Naive thymus-derived CD4-positive, alpha-beta T cell (primary cell): ENCODE measurements at regions of chr1 and their contacts with region 1.

Region 1: DNA sequence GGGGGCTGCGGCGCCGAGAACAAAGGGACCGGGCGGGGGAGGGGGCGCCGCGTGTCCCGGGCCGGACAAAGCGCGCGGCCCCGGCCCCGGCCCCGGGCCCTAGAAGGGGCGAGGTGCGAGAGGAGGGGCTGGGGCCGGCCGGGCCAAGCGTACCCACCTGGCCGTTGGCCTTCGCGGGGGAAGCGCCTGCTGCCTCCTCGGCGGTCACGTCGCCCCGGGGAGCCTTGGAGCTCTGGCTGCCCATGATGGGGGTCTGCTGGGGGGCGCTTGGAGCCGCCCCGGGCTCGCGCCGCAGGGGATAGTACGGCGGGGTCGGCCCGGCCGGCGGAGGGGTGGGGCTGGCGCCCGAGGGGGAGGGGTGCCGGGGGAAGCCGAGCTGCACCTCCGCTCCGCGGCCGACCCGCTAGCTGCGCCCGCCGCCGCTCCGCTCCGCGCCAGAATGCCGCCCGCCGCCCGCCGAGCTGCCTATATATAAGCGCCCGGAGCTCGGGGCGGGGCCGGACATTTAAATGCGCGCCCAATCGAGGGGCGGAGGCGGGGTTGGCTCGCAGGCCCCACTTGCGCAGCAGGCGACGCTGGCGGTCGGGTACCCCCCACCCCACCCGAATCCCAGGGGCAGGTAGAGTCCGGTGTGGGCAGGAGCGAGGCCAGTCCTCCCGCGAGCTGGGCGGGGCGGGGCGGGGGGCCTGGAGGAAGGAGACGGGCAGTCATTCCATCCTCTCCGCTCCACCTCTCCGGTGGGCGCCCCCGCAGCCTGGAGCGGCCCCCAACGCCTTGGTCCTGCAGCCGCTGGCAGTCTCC is at the start of gene MARCKSL1:
- DNase-seq: peak; percentile 81 to 90 (median 87)
- ATAC-seq: peak; percentile 64
- H3K4me3 ChIP-seq: peak within 1 kb of the TSS; percentile 60
- H3K4me3 Mint-ChIP-seq: peak within 1 kb of the TSS; percentile 82 to 93 (median 90)
- H3K27ac ChIP-seq: peak within 1 kb of the TSS; percentile 70
- H3K27ac Mint-ChIP-seq: peak within 1 kb of the TSS; percentile 74 to 95 (median 89)
- H3K4me1 ChIP-seq: peaks cover 20 to 33% of the 10 kb centered on the region in 2 donors
- H3K4me1 Mint-ChIP-seq: peaks cover 38 to 52% (median 43%) of the 10 kb centered on the region in 7 donors
- H3K27me3 ChIP-seq: no peaks in the 10 kb centered on the region
- H3K27me3 Mint-ChIP-seq: peaks cover 0 to 1% (median 0%) of the 10 kb centered on the region in 5 donors
- total RNA-seq, gene MARCKSL1: 22.2 to 70.2 (median 41.7) TPM

Region 2: DNA sequence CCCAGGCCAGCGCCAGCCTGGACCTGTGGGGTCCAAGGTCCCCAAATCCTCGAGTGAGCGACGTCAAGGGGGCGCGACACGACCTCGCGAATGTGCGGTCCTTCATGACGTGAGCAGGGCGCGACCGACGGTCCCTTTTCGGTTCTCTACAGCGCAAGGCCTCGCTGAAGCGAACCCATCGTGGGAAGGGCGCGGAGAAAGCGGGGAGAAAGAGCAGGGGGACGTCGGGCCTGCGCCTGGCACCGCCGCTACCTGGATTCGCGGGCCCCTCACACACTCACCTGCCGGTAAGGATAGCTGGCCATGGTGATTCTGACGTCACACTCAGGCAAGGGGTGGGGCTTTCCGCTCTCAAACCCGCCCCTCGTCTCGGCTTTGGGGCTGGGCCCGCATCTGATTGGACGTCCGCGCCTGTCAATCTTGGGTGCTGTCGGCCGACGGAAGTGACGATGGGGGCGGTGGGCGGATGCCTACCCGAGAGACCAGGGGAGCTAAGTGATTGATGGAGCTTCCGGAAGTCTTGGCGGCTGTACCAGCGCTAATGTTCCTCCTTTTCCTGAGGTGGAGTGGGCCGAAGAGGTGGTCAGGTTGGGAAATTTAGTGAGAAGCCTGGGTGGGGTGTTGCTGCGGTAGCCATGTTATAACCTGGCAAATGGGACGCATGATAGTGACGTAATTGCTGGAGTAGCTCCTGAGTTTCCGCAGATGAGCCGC is 691.3 kb before region 1 on chr1 and contains the start of gene PEF1:
- CTCF ChIA-PET with region 1: no interaction called
- POLR2A ChIA-PET with region 1: no interaction called
- intact Hi-C with region 1: loop called in 1 of 2 experiments (anchors 5 kb)
- DNase-seq: peak; percentile 97 to 100 (median 99)
- ATAC-seq: peak; percentile 94
- H3K4me3 ChIP-seq: peak within 1 kb of the TSS; percentile 91
- H3K4me3 Mint-ChIP-seq: peak within 1 kb of the TSS; percentile 92 to 100 (median 98)
- H3K27ac ChIP-seq: peak within 1 kb of the TSS; percentile 98
- H3K27ac Mint-ChIP-seq: peak within 1 kb of the TSS; percentile 98 to 100 (median 99)
- H3K4me1 ChIP-seq: peaks cover 27 to 30% of the 10 kb centered on the region in 2 donors
- H3K4me1 Mint-ChIP-seq: peaks cover 18 to 47% (median 40%) of the 10 kb centered on the region in 7 donors
- H3K27me3 ChIP-seq: no peaks in the 10 kb centered on the region
- H3K27me3 Mint-ChIP-seq: no peaks in the 10 kb centered on the region
- total RNA-seq, gene PEF1: 37.7 to 49.8 (median 40.8) TPM

Region 3: DNA sequence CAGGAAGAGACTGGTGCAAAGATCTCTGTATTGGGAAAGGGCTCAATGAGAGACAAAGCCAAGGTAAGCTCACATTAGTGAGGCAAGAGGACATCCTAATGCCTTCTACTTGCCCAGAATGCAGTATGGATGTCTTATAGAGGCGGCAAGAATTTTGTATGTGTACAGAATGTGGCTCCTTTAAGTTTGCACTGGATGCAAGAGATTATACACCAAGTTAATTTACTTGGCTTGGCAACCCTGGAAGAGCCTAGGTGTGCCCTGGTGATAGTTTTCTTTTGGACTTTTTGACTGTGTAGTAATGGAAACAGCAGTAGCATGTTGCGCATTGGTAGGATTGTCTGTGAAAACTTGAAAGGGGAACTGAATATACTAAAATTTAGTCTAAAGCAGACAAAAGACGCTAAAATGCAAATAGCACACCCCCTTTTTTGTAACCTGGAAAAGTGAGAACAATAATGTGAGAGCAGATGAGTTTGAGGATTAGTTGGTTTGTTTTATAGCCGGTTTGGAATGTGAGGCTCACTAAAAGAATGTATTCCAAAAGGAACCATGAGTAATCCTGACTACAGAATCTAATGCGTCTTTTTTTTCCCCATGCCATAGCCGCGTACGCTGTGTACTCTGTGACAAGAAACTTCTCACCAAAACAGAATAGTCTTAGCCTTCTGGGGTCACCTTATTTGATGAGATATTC is 304.3 kb before region 1 on chr1:
- CTCF ChIA-PET with region 1: no interaction called
- POLR2A ChIA-PET with region 1: no interaction called
- intact Hi-C with region 1: no loop called
- DNase-seq: no peak
- ATAC-seq: no peak
- H3K4me3 ChIP-seq: no peak overlapping the region
- H3K4me3 Mint-ChIP-seq: no peak overlapping the region
- H3K27ac ChIP-seq: no peak overlapping the region
- H3K27ac Mint-ChIP-seq: peak overlapping the region in 6 of 9 donors; percentile 16 to 59 (median 32)
- H3K4me1 ChIP-seq: peaks cover 6% of the 10 kb centered on the region in 2 donors
- H3K4me1 Mint-ChIP-seq: peaks cover 29 to 72% (median 67%) of the 10 kb centered on the region in 7 donors
- H3K27me3 ChIP-seq: no peaks in the 10 kb centered on the region
- H3K27me3 Mint-ChIP-seq: no peaks in the 10 kb centered on the region

Region 4: GRCh38 chr1:32215629-32216480 is 120.1 kb before region 1 on chr1:
- CTCF ChIA-PET with region 1: interaction called, 14 read pairs
- POLR2A ChIA-PET with region 1: interaction called, 16 read pairs
- intact Hi-C with region 1: loop called in 1 of 2 experiments (anchors 1 kb)
- DNase-seq: peak in 8 of 9 donors; percentile 29 to 63 (median 52)
- ATAC-seq: peak; percentile 92
- H3K4me3 ChIP-seq: no peak overlapping the region
- H3K4me3 Mint-ChIP-seq: peak overlapping the region in 6 of 10 donors; percentile 7 to 43 (median 32)
- H3K27ac ChIP-seq: peak overlapping the region; percentile 59
- H3K27ac Mint-ChIP-seq: peak overlapping the region; percentile 25 to 86 (median 63)
- H3K4me1 ChIP-seq: peaks cover under 1 to 12% of the 10 kb centered on the region in 2 donors
- H3K4me1 Mint-ChIP-seq: peaks cover 12 to 31% (median 24%) of the 10 kb centered on the region in 7 donors
- H3K27me3 ChIP-seq: no peaks in the 10 kb centered on the region
- H3K27me3 Mint-ChIP-seq: no peaks in the 10 kb centered on the region

Region 5: GRCh38 chr1:32247983-32248889 is 87.8 kb before region 1 on chr1:
- CTCF ChIA-PET with region 1: interaction called, 13 read pairs
- POLR2A ChIA-PET with region 1: interaction called, 41 read pairs
- intact Hi-C with region 1: loop called in 1 of 2 experiments (anchors 2 kb)
- DNase-seq: peak; percentile 43 to 84 (median 56)
- ATAC-seq: peak; percentile 45
- H3K4me3 ChIP-seq: peak overlapping the region; percentile 52
- H3K4me3 Mint-ChIP-seq: peak overlapping the region; percentile 66 to 100 (median 98)
- H3K27ac ChIP-seq: peak overlapping the region; percentile 91
- H3K27ac Mint-ChIP-seq: peak overlapping the region; percentile 92 to 100 (median 99)
- H3K4me1 ChIP-seq: peaks cover 37 to 51% of the 10 kb centered on the region in 2 donors
- H3K4me1 Mint-ChIP-seq: peaks cover 32 to 60% (median 52%) of the 10 kb centered on the region in 7 donors
- H3K27me3 ChIP-seq: no peaks in the 10 kb centered on the region
- H3K27me3 Mint-ChIP-seq: peaks cover 0 to 2% (median 0%) of the 10 kb centered on the region in 5 donors

Region 6: GRCh38 chr1:32291708-32292492 is 44.1 kb before region 1 on chr1 and contains the start of gene HDAC1:
- CTCF ChIA-PET with region 1: interaction called, 3 read pairs
- POLR2A ChIA-PET with region 1: interaction called, 38 read pairs
- intact Hi-C with region 1: loop called (anchors 1 to 5 kb)
- DNase-seq: peak; percentile 91 to 97 (median 94)
- ATAC-seq: peak; percentile 98
- H3K4me3 ChIP-seq: peak within 1 kb of the TSS; percentile 92
- H3K4me3 Mint-ChIP-seq: peak within 1 kb of the TSS; percentile 94 to 100 (median 98)
- H3K27ac ChIP-seq: peak within 1 kb of the TSS; percentile 88
- H3K27ac Mint-ChIP-seq: peak within 1 kb of the TSS; percentile 94 to 99 (median 98)
- H3K4me1 ChIP-seq: peaks cover 38 to 46% of the 10 kb centered on the region in 2 donors
- H3K4me1 Mint-ChIP-seq: peaks cover 37 to 67% (median 48%) of the 10 kb centered on the region in 7 donors
- H3K27me3 ChIP-seq: no peaks in the 10 kb centered on the region
- H3K27me3 Mint-ChIP-seq: no peaks in the 10 kb centered on the region
- total RNA-seq, gene HDAC1: 81.8 to 205 (median 174) TPM

Region 7: GRCh38 chr1:32361674-32362473 is 25.9 kb after region 1 on chr1:
- CTCF ChIA-PET with region 1: no interaction called
- POLR2A ChIA-PET with region 1: interaction called, 16 read pairs
- intact Hi-C with region 1: no loop called
- DNase-seq: peak in 2 of 9 donors; percentile 18 to 38
- ATAC-seq: peak; percentile 62
- H3K4me3 ChIP-seq: no peak overlapping the region
- H3K4me3 Mint-ChIP-seq: peak overlapping the region; percentile 2 to 80 (median 63)
- H3K27ac ChIP-seq: peak overlapping the region; percentile 43
- H3K27ac Mint-ChIP-seq: peak overlapping the region in 2 of 9 donors; percentile 42 to 50
- H3K4me1 ChIP-seq: peaks cover 7 to 8% of the 10 kb centered on the region in 2 donors
- H3K4me1 Mint-ChIP-seq: peaks cover 21 to 39% (median 27%) of the 10 kb centered on the region in 7 donors
- H3K27me3 ChIP-seq: no peaks in the 10 kb centered on the region
- H3K27me3 Mint-ChIP-seq: peaks cover 0 to 10% (median 5%) of the 10 kb centered on the region in 5 donors